Right lobe of liver (tissue), 6 donors: ENCODE measurements at regions of chr1 and their contacts with region 1.

Region 1: GRCh38 chr1:201361652-201362504 is 15.6 kb downstream of the TNNT2 start:
- DNase-seq: peak in 2 of 3 donors; percentile 38 to 58
- ATAC-seq: peak; percentile 65 to 76 (median 75)
- H3K4me3 ChIP-seq: no peak overlapping the region
- H3K27ac ChIP-seq: no peak overlapping the region
- H3K4me1 ChIP-seq: no peaks in the 10 kb centered on the region
- H3K27me3 ChIP-seq: no peaks in the 10 kb centered on the region
- CTCF ChIP-seq: peak; percentile 68 to 84 (median 79)
- POLR2A ChIP-seq: no peak

Region 2: GRCh38 chr1:201254625-201255506 is 107.0 kb before region 1 on chr1:
- intact Hi-C with region 1: loop called (anchors 5 kb)
- DNase-seq: peak in 2 of 3 donors; percentile 55 to 67
- ATAC-seq: peak; percentile 75 to 90 (median 86)
- H3K4me3 ChIP-seq: no peak overlapping the region
- H3K27ac ChIP-seq: no peak overlapping the region
- H3K4me1 ChIP-seq: peaks cover 0 to 3% (median 0%) of the 10 kb centered on the region in 4 donors
- H3K27me3 ChIP-seq: no peaks in the 10 kb centered on the region
- CTCF ChIP-seq: peak; percentile 94 to 96 (median 94)
- POLR2A ChIP-seq: no peak